Sigmoid colon (tissue), 7 donors: ENCODE measurements at regions of chr4 and their contacts with region 1.

Region 1: GRCh38 chr4:27000820-27001219 is 140.2 kb downstream of the STIM2 start:
- DNase-seq: no peak
- H3K4me3 ChIP-seq: no peak overlapping the region
- H3K27ac ChIP-seq: no peak overlapping the region
- H3K4me1 ChIP-seq: peaks cover 0 to 27% (median 12%) of the 10 kb centered on the region in 4 donors
- H3K27me3 ChIP-seq: no peaks in the 10 kb centered on the region
- CTCF ChIP-seq: no peak
- EP300 ChIP-seq: no peak
- POLR2A ChIP-seq: no peak

Region 2: DNA sequence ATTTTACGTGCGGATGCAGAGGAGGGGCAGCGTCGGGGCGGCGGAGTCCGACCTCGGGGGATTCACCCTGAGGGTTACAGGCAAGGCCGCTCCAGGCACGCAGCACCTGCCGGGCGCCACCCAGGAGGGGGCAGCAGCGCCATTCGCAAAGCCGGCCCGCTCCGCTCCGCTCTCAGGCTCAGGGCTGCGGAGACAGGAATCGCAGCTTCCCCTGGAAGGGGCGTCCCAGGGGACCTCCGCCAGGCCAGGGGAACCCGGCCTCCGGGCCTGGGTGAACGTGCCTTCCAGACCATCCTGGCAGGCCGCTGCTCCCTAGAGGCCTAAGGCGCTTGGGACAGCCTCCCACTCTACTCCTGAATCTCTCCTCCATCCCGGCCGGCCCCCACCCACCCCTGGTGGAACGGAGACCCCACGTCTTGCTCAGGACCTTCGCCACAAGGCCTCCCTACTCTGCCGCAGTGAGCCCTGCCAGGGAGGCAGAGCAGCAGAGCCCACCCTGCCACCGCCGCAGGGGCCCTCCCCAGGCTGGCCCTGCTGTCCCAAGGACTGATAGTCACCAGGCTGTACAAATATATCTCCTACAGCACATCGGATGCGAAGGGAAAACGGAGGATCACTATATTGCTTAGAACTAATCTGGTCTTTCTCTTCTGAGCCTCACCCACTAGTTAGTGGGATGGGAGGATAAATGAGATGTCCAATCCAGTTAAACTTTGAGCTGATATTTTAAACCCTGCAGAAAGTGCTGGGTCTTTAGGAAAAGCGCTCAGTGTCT is 971.8 kb before region 1 on chr4:
- intact Hi-C with region 1: loop called (anchors 5 kb)
- DNase-seq: peak; percentile 88
- H3K4me3 ChIP-seq: peak overlapping the region in 3 of 4 donors; percentile 20 to 24 (median 23)
- H3K27ac ChIP-seq: peak overlapping the region in 1 of 4 donors; percentile 36
- H3K4me1 ChIP-seq: peaks cover 0 to 28% (median 20%) of the 10 kb centered on the region in 4 donors
- H3K27me3 ChIP-seq: no peaks in the 10 kb centered on the region
- CTCF ChIP-seq: peak; percentile 67 to 93 (median 72)
- EP300 ChIP-seq: no peak
- POLR2A ChIP-seq: no peak

Region 3: GRCh38 chr4:26746802-26747213 is 254.0 kb before region 1 on chr4:
- intact Hi-C with region 1: loop called (anchors 10 kb)
- DNase-seq: no peak
- H3K4me3 ChIP-seq: no peak overlapping the region
- H3K27ac ChIP-seq: no peak overlapping the region
- H3K4me1 ChIP-seq: peaks cover 0 to 3% (median 1%) of the 10 kb centered on the region in 4 donors
- H3K27me3 ChIP-seq: no peaks in the 10 kb centered on the region
- CTCF ChIP-seq: no peak
- EP300 ChIP-seq: no peak
- POLR2A ChIP-seq: no peak